ENCODE measurements at regions of chr18 and their contacts with region 1.

Region 1: DNA sequence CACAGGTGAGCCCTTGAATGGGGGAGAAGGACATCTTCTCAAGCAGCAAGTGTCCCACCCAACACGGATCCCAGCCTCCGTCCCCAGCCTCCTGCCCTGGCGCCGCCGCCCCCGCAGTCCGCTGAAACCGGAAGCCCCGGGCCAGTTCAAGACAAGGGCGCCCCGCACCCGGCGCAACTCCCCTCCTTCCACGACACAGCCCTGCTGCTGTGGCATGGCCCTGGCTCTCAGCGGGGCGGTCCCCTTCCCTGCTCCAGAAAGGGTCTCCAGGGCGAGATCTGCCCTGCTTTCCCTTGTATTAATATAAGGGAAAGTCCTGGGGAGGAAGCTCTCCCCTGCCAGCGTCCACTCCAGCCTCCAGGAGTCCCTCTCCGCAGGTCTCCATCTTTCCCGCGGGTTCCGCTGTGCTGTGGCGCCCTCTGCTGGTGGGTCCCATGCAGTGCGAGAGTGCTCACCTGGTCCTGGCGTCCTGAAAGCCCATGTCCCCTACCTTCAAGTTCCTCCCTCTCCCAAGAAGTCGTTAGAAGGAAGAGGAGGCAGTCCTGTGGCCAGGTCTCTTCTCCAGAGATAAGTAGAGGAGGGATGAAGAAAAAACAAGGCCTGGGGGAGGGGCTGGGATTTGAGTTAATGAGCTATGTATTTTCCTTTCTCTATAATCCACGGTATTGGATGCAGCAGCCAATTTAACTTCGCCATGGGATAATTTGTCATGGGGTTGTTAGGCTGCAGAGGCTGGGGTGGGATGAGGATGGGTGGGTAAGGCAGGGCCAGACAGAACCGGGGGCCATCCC is 176.0 kb downstream of the SMAD2 start:
- H3K4me3 Mint-ChIP-seq: no peak overlapping the region
- H3K27ac Mint-ChIP-seq: no peak overlapping the region
- H3K4me1 Mint-ChIP-seq: peaks cover 7% of the 10 kb centered on the region
- H3K27me3 Mint-ChIP-seq: peaks cover 14% of the 10 kb centered on the region

Region 2: DNA sequence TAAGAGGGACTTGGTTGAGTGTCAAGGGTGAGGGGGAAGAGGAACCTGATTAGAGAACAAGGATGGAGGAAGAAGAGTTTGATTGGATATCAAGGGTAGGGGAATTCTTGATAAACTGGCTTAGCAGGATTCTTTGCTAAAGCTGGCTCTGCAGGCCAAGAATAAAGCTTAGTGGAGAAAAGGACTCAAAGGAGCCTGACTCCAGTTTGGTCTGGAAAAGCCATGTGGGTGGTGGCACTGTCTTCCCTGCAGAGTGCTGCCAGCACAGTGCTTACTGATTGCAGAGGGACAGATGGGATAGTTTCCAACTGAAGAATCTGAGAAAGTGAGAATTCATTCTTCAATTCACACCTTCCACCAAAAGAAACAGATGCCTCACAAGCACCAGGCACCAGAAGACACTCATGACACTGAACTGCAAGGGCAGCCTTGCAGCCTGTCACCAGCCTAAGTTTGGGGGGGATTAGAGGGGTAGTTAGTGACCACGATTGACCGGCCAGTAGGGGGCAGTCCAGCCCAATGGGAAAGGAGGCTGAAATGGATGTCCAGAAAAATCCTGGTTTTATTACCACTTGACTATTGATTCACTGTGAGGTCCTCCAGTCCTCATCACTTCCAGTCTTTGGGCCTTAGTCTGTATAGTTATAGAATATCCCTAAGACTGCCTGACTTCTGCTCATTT is 158.6 kb before region 1 on chr18:
- intact Hi-C with region 1: loop called (anchors 5 kb)
- H3K4me3 Mint-ChIP-seq: no peak overlapping the region
- H3K27ac Mint-ChIP-seq: no peak overlapping the region
- H3K4me1 Mint-ChIP-seq: no peaks in the 10 kb centered on the region
- H3K27me3 Mint-ChIP-seq: peaks cover 6% of the 10 kb centered on the region

Measured in dendritic cell treated with granulocyte-macrophage colony-stimulating factor and Interleukin-4, amounts not matched to agents 40 ng/mL and 50 ng/mL, for 4 days (primary cell).